AG04449 (cell line): ENCODE measurements at regions of chr11 and their contacts with region 1.

Region 1: DNA sequence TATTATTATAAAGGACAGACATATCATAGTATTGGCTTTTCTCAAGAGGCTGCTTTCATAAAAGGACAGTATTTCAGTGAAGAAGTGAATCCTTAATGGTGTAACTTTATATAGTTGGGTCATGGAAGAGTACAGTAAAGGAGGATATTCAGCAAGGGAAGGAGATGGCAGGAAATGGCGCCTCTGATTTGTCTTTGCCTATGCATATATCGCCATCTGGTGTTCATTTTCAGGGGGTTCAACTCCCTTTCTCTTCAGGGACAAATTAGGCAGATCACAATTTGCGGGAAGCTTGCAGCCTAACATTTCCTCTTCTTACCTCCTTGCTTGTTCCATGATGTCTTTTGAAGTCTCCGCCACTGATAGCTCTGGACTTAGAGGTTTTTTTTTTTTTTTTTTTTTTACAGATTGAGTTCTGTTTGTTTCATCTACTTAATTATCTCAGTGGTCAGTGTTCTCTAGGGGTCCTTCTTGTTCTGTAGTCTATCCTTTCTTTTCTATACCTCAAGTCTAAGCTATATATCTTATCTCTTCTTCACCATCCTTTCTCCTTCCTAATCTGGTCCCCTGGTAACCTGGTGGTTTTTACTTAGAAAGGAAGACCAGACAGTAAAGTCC is 21.8 kb upstream of the RRM1 start:
- DNase-seq: no peak
- H3K4me3 ChIP-seq: no peak overlapping the region
- CTCF ChIP-seq: peak; percentile 72

Region 2: GRCh38 chr11:3781423-3781822 is 291.4 kb before region 1 on chr11:
- CTCF ChIA-PET with region 1: interaction called, 16 read pairs
- POLR2A ChIA-PET with region 1: no interaction called
- DNase-seq: no peak
- H3K4me3 ChIP-seq: no peak overlapping the region
- CTCF ChIP-seq: no peak

Region 3: GRCh38 chr11:3824714-3825472 is 247.9 kb before region 1 on chr11:
- CTCF ChIA-PET with region 1: interaction called, 1,868 read pairs
- POLR2A ChIA-PET with region 1: no interaction called
- DNase-seq: no peak
- H3K4me3 ChIP-seq: no peak overlapping the region
- CTCF ChIP-seq: peak; percentile 64

Region 4: DNA sequence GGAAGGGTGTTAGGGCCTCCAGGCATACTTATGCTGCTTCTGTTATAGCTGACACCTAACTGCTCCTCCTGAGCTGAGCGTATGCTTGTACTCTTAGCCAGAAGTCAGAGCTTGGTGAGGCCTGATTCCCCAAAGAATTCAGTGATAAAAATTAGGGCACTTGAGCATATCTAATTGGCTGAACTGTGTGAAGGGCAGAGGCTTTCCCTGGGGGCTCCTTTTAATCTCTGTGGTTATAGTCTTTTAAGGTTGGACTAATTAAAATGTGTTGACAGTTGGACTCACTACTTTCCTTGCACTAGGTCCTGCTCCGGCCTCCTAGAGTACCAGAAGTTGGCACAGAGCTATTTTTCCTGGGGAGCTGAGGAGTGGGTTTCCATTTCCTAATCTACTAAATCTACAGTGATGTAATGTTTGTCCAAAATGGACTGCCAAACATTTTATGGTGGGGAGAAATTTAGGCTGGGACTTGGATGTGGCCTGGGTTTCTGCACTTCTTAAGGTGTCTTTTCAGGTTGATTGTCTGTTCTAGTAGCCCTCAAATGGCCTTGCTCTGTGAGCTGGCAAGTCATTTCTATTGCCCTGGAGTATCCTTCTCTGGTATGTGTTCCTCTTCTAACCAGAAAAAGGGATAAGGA is 198.9 kb before region 1 on chr11:
- CTCF ChIA-PET with region 1: interaction called, 19 read pairs
- POLR2A ChIA-PET with region 1: no interaction called
- DNase-seq: no peak
- H3K4me3 ChIP-seq: no peak overlapping the region
- CTCF ChIP-seq: no peak

Region 5: DNA sequence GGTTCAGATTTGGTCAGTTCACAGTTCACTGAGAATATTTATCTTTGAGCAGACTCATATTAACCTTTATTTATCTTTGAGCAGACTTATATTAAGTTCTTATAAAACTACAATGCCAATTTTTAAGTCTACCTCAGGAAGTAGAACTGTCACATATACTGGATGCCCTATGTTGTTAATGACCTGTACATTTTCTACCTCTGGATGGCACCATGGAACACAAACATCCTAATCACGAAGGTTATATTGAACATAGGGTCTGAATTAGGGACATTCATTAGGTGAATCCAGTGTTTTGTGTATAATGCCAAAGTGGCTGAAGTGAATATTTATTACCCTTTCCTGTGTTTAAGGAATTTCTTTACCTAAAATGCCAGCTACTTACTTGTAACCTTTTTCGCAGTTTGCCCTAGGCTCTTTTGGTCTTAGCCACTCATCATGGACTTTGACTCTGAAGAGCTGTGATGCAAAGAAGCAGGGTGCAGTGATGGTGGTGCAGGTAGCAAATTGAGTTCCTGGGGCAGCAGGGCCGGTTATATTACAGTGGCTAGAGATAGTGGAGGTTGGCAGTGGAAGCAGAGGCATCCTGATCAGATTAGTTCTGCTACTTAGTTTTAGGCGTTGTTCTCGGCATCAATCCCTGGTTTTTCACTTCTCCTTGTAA is 145.5 kb before region 1 on chr11:
- CTCF ChIA-PET with region 1: interaction called, 12 read pairs
- POLR2A ChIA-PET with region 1: no interaction called
- DNase-seq: no peak
- H3K4me3 ChIP-seq: no peak overlapping the region
- CTCF ChIP-seq: no peak

Region 6: DNA sequence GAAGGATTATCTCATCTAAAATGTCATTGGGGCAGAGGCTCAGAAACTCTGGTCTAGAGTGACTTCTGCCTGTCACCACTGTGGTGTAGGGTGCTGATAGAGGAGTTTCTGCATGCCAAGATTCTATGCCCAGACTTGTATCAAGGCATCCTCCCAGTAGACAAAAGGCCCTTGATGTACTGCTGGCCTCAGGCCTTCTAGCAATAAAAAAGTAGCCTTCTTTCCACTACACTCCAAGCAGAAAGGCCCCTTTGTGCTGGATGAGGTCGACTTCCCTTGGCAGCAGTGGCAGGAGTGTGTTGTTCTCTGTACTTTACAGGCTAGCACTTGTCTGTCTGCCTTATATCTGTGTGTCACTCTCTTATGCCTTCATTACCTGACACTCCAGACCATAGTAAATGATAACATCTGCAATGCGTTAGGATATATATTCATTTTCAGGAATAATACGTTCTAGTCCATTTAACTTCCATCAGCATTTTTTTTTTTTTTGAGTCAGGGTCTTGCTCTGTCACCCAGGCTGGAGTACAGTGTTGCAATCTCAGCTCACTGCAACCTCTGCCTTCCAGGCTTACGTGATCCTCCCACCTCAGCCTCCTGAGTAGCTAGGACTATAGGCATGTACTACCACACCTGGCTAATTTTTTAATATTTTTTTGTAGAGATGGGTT is 27.7 kb before region 1 on chr11:
- CTCF ChIA-PET with region 1: interaction called, 29 read pairs
- POLR2A ChIA-PET with region 1: no interaction called
- DNase-seq: no peak
- H3K4me3 ChIP-seq: no peak overlapping the region
- CTCF ChIP-seq: no peak

Region 7: DNA sequence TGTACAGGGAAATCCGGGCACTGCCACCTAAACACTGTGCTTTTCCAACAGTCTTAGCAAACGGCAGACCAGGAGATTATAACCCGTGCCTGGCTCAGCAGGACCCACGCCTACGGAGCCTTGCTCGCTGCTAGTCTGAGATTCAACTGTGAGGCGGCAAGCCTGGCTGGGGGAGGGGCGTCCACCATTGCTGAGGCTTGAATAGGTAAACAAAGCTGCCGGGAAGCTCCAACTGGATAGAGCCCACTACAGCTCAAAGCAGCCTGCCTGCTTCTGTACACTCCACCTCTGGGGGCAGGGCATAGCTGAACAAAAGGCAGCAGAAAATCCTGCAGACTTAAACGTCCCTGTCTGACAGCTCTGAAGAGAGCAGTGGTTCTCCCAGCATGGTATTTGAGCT is 458.9 kb after region 1 on chr11:
- CTCF ChIA-PET with region 1: no interaction called
- POLR2A ChIA-PET with region 1: no interaction called
- DNase-seq: no peak
- H3K4me3 ChIP-seq: no peak overlapping the region
- CTCF ChIP-seq: no peak